ENCODE measurements at regions of chr12 and their contacts with region 1.

Region 1: DNA sequence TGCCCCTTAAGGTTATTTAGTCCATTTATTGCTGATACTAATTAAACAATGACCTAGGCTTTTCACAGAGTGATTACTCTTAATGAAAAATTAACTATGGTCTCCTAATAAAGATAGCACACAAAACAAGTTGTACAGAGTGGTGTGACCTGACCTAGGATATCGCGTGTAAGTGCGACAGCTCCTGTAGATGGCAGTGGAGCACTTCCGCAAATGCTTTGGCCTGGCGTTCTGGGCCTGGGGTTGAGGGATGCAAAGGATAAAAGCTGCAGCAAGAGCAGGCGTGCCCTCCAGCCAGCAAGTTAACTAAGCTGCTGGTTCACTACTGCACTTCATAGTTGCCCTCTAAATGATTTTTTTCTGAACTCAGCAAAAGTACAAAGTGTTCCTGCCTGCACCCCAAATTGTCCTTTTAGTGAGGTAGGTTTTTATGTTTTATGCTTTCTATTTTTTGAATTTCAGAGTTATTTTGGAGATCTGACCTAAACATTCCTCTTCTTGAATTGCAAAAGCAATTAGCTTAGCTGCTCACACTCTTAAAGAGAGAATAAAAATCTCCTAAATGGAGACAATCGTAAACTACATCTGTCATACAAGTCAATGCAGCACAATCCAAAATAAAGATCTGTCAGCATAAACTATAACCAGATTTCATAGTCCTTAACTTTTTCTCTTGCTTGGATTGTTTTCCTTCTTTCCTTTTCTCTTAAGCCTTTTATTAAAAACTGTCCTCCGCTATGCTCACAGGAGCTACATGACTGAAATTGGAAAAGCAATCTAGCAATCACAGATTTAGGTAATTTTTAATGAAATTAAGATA is 379.6 kb downstream of the LRIG3 start:
- DNase-seq: peak in 1 of 2 donors; percentile 74
- H3K4me3 ChIP-seq: no peak overlapping the region
- H3K27ac ChIP-seq: no peak overlapping the region
- H3K4me1 ChIP-seq: peaks cover 0 to 2% of the 10 kb centered on the region in 2 donors
- H3K27me3 ChIP-seq: no peaks in the 10 kb centered on the region
- CTCF ChIP-seq: peak; percentile 47 to 81 (median 66)

Region 2: GRCh38 chr12:59087077-59087673 is 546.5 kb after region 1 on chr12:
- intact Hi-C with region 1: loop called (anchors 2 kb)
- DNase-seq: no peak
- H3K4me3 ChIP-seq: no peak overlapping the region
- H3K27ac ChIP-seq: no peak overlapping the region
- H3K4me1 ChIP-seq: peaks cover 0 to 6% of the 10 kb centered on the region in 2 donors
- H3K27me3 ChIP-seq: no peaks in the 10 kb centered on the region
- CTCF ChIP-seq: peak in 2 of 3 experiments; percentile 41 to 47

Region 3: GRCh38 chr12:59149997-59150642 is 609.4 kb after region 1 on chr12:
- intact Hi-C with region 1: loop called (anchors 5 kb)
- DNase-seq: no peak
- H3K4me3 ChIP-seq: no peak overlapping the region
- H3K27ac ChIP-seq: no peak overlapping the region
- H3K4me1 ChIP-seq: peaks cover 0 to 8% of the 10 kb centered on the region in 2 donors
- H3K27me3 ChIP-seq: no peaks in the 10 kb centered on the region
- CTCF ChIP-seq: peak; percentile 88 to 94 (median 93)